ENCODE measurements at regions of chr2 and their contacts with region 1.

Region 1: GRCh38 chr2:43226558-43226954 is at the start of gene ZFP36L2:
- DNase-seq: peak; percentile 96
- H3K4me3 Mint-ChIP-seq: peak within 1 kb of the TSS; percentile 94
- H3K27ac Mint-ChIP-seq: peak within 1 kb of the TSS; percentile 96
- H3K4me1 Mint-ChIP-seq: peaks cover 32% of the 10 kb centered on the region
- H3K27me3 Mint-ChIP-seq: no peaks in the 10 kb centered on the region
- total RNA-seq, gene ZFP36L2: 78.4 to 79.8 TPM

Region 2: DNA sequence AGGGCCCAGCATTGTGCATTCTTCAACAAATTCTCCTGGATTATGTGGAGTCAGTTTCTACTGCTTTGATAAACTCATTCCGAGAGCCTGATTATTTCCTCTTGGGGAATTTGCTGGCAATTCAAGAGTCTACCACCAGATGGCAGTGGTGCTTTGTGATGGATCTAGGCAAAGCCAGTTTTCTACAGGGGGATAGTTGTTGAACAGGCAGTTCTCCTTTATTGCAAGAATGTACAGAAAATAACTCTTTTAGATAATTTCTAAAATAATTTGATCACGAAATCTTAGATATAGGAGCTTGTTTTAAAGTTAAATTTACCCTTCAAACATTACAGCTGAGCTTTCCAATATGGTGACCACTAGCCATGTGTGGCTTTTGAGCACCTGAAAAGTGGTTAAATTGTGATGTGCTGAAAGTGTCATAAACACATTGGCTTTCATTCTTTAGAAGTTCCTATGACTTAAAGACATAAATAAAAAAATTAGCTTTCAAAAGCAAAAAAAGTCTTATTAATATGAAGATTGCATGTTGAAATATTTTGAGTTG is 367.5 kb before region 1 on chr2:
- CTCF ChIA-PET with region 1: interaction called, 13 read pairs
- POLR2A ChIA-PET with region 1: no interaction called
- intact Hi-C with region 1: loop called (anchors 2 kb)
- DNase-seq: peak; percentile 81
- H3K4me3 Mint-ChIP-seq: no peak overlapping the region
- H3K27ac Mint-ChIP-seq: no peak overlapping the region
- H3K4me1 Mint-ChIP-seq: peaks cover 6% of the 10 kb centered on the region
- H3K27me3 Mint-ChIP-seq: no peaks in the 10 kb centered on the region

Region 3: DNA sequence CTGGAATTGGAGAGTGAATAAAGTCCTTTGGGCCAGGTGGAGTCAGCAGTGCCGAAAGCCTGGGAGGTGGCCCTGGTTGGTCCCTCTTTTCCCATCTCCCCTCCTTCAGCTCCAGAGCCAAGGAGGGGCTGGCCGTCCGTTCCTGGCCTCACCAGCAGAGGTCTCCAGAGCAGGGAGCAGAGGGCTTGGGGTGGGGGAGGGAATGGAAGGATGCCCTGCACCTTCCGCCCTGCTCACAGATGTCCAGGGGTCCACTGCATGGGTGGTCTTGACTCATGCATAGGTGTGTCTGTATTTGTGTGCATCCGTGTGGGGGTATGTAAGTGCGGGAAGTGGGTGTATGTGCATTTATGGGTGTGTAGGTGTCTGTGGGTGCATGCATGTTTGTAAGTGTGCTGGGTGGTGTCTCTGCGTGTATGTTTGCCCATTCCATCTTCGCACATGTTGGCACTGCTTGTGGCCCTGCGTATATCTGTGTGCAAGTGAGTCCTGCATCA is 202.0 kb before region 1 on chr2:
- CTCF ChIA-PET with region 1: interaction called, 10 read pairs
- POLR2A ChIA-PET with region 1: no interaction called
- intact Hi-C with region 1: loop called (anchors 1 kb)
- DNase-seq: peak; percentile 49
- H3K4me3 Mint-ChIP-seq: no peak overlapping the region
- H3K27ac Mint-ChIP-seq: no peak overlapping the region
- H3K4me1 Mint-ChIP-seq: no peaks in the 10 kb centered on the region
- H3K27me3 Mint-ChIP-seq: no peaks in the 10 kb centered on the region

Region 4: GRCh38 chr2:43158259-43158880 is 68.2 kb before region 1 on chr2:
- CTCF ChIA-PET with region 1: interaction called, 11 read pairs
- POLR2A ChIA-PET with region 1: interaction called, 9 read pairs
- intact Hi-C with region 1: loop called (anchors 1 kb)
- DNase-seq: peak; percentile 85
- H3K4me3 Mint-ChIP-seq: peak overlapping the region; percentile 74
- H3K27ac Mint-ChIP-seq: peak overlapping the region; percentile 99
- H3K4me1 Mint-ChIP-seq: peaks cover 59% of the 10 kb centered on the region
- H3K27me3 Mint-ChIP-seq: no peaks in the 10 kb centered on the region

Region 5: GRCh38 chr2:43194121-43194869 is 32.3 kb before region 1 on chr2:
- CTCF ChIA-PET with region 1: interaction called, 14 read pairs
- POLR2A ChIA-PET with region 1: interaction called, 20 read pairs
- intact Hi-C with region 1: loop called (anchors 1 kb)
- DNase-seq: no peak
- H3K4me3 Mint-ChIP-seq: peak overlapping the region; percentile 77
- H3K27ac Mint-ChIP-seq: peak overlapping the region; percentile 97
- H3K4me1 Mint-ChIP-seq: peaks cover 57% of the 10 kb centered on the region
- H3K27me3 Mint-ChIP-seq: no peaks in the 10 kb centered on the region

Region 6: DNA sequence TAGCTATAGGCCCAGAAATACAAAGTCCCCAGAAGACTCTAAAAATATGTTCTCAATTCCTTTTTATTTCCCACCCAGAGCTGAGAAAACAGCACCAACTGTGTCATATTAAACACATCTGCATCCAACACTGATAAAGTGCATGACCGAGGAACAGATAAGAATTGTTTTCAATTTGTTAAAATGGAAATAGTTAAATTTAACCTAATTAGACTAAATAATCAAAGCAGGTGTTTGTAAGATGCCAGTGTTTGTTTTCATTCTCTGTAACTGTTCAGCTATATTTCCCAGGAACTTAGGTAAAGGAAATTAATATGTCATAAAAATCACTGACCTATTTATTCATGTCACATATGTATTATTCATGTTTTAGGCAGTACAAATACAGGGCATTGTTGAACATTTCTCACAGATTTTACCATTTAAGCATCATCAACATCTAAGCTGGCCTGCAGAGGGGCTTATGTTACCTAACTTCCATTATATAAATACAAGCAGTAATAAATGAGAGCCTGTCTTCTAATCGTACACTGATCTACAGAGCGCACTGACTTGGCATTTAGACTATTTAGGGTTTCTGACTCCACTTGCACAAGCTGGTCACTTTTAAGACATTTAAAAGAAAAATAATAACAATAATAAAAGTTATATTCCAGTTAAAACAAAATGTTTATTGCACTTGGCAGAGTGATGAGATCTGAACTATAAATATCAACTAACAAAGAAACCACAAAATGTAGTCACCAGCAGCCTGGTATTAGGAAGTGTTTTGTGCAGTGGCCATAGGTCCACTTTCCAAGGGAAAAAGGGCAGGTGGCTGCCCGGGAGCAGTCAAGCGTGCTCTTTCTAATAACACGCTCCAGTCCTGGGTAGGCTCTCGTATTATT is 86.4 kb after region 1 on chr2:
- CTCF ChIA-PET with region 1: no interaction called
- POLR2A ChIA-PET with region 1: no interaction called
- intact Hi-C with region 1: no loop called
- DNase-seq: no peak
- H3K4me3 Mint-ChIP-seq: no peak overlapping the region
- H3K27ac Mint-ChIP-seq: no peak overlapping the region
- H3K4me1 Mint-ChIP-seq: peaks cover 14% of the 10 kb centered on the region
- H3K27me3 Mint-ChIP-seq: no peaks in the 10 kb centered on the region

Region 7: DNA sequence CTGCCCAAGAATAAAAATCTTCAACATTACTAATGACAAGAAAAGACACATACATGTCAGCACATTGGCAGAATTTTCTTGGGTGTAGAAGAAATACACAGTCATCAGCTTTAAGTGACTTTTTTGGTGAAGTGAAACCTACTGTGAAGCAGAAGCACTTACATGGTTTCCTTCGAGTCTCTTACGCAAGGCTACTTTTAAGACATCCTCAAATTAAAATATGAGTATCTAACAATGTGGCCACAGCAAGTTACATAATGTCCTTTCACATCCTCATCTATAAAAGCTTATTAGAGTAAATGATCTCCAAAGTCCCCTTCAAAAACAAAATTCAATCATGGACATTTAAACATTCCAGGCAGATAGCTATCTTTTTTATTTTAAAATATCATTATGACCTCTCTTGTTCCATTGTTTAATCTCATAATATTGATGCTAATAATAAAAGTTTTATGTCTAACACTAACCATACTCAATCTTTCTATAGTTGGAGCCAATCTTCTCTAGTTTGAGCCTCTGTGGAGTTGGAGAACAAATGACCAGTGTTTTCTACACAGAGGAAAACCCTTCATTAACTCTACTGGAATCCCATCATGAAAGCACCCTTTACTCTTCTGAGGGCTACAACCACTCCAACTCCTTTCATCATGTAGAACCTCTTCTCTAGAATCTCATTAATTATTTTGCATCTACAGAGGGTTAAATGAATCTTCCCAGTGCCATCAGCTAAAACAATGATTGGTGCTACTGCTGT is 182.0 kb after region 1 on chr2:
- CTCF ChIA-PET with region 1: no interaction called
- POLR2A ChIA-PET with region 1: no interaction called
- intact Hi-C with region 1: no loop called
- DNase-seq: no peak
- H3K4me3 Mint-ChIP-seq: no peak overlapping the region
- H3K27ac Mint-ChIP-seq: no peak overlapping the region
- H3K4me1 Mint-ChIP-seq: no peaks in the 10 kb centered on the region
- H3K27me3 Mint-ChIP-seq: no peaks in the 10 kb centered on the region

Region 8: DNA sequence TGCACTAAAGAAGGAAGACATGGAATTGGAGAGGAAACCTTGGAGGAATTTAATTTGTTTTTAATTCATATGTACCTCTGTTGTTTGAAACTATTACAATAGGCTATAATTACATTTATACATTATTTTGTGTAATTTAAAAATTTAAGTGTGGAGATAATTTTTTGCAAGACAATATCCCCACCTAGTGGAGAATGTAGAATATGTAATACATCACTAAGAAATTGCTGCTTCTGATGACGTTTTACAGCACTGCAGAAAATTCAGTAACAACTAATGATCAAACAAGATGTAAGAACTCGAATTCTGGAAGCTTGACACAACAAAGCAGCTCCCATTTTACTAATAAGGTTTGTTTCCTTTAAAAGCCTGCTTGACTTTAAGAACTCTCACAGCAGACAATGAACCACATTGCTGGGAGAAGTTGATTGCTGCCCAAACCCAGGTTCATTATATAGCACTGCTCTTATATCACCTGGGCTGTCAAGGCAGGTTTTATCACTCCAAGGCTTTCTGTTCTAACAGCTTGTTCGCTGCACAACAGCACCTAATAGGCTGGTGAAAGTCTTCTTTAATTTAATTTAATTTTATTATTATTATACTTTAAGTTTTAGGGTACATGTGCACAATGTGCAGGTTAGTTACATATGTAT is 315.9 kb after region 1 on chr2:
- CTCF ChIA-PET with region 1: interaction called, 21 read pairs
- POLR2A ChIA-PET with region 1: interaction called, 6 read pairs
- intact Hi-C with region 1: loop called (anchors 2 kb)
- DNase-seq: no peak
- H3K4me3 Mint-ChIP-seq: no peak overlapping the region
- H3K27ac Mint-ChIP-seq: no peak overlapping the region
- H3K4me1 Mint-ChIP-seq: peaks cover 21% of the 10 kb centered on the region
- H3K27me3 Mint-ChIP-seq: no peaks in the 10 kb centered on the region